ENCODE measurements at regions of chr4 and their contacts with region 1.

Region 1: DNA sequence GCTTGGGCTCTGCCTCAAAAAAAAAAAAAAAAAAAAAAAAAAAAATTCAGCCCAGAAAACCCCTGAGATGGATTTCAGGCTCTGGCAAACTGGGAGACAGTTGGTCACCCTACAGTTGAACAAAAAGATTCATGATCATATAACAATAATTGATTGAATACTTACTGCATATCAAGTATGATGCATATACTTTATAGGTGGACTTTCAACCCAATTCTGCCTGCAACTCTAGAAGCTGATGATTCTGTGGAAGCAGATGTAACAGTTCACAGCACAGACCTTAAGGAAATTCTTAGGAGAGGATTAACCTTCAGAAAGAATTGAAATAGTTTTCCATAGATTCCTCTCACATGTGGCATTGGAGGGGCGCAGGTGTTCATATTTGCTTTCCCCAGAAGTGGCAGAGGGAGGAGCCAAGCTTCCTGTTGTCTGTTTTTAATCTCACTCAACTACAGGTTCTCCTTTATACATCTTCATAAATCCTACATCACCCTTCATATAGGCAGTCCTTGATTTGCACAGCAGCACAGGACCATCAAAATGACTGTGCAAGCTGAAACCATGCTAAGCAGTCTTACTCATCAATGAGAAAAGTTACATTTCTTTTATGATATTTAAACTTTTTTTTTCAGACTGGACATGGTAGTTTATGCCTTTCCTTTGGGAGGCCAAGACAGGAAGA is 149.4 kb upstream of the KLF3 start:
- DNase-seq: peak in 1 of 5 donors; percentile 9
- H3K4me3 ChIP-seq: no peak overlapping the region
- H3K4me3 Mint-ChIP-seq: peak overlapping the region; percentile 34 to 82 (median 74)
- H3K27ac ChIP-seq: no peak overlapping the region
- H3K27ac Mint-ChIP-seq: peak overlapping the region in 5 of 7 donors; percentile 4 to 86 (median 22)
- H3K4me1 ChIP-seq: peaks cover 81% of the 10 kb centered on the region
- H3K4me1 Mint-ChIP-seq: peaks cover 57 to 78% (median 69%) of the 10 kb centered on the region in 4 donors
- H3K27me3 ChIP-seq: no peaks in the 10 kb centered on the region
- H3K27me3 Mint-ChIP-seq: no peaks in the 10 kb centered on the region

Region 2: DNA sequence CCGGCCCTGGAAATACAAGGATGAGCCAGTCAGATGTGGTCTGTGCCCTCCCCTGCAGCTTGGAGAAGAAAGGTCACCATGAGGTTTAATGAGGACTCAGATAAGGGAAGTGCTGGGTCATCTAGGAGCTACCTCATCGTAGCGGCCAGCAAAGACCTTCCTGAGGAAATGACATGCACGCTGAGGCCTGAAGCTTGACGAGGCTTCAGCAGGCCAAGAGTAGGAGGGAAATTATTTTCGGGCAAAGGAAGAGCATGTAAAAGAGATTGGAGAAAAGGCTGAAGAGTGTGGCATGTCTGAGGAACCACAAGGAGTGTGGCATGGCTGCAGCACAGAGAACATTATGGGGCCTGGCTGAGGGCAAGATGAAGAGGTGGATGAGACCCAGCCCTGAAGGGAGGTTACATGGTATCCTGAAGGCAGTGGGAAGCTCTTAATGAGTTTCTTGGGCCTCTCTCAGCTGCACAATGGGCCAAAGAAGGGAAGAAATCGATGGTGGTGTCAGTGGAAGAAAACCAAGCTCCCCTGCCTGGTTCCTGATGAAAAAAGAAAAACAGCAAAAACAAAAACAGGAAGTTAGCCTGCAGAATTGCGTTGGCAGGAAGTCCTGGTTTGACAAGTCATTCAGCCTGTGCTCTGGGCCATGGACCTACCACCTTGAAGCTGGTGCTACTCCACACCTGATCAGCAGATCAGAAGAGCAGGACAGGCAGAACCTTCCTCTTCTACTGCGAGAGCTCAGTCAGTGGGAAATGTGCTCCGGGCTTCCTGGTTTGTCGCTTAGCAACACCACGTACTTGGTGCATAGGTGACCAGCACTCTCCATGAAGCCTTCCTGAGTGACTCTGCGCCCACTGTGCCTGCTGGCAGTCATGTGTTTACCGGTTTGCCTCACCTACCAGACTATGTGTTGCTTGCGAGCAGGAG is 14.8 kb after region 1 on chr4:
- CTCF ChIA-PET with region 1: interaction called, 8 read pairs
- POLR2A ChIA-PET with region 1: interaction called, 32 read pairs
- intact Hi-C with region 1: loop called (anchors 2 kb)
- DNase-seq: peak; percentile 55 to 75 (median 62)
- H3K4me3 ChIP-seq: peak overlapping the region in 1 of 2 donors; percentile 1
- H3K4me3 Mint-ChIP-seq: peak overlapping the region in 7 of 8 donors; percentile 49 to 81 (median 58)
- H3K27ac ChIP-seq: peak overlapping the region; percentile 3
- H3K27ac Mint-ChIP-seq: peak overlapping the region; percentile 82 to 92 (median 88)
- H3K4me1 ChIP-seq: peaks cover 43% of the 10 kb centered on the region
- H3K4me1 Mint-ChIP-seq: peaks cover 23 to 69% (median 42%) of the 10 kb centered on the region in 4 donors
- H3K27me3 ChIP-seq: no peaks in the 10 kb centered on the region
- H3K27me3 Mint-ChIP-seq: no peaks in the 10 kb centered on the region

Measured in CD4-positive, alpha-beta memory T cell (primary cell).